AG04450 (cell line): ENCODE measurements at regions of chr22 and their contacts with region 1.

Region 1: GRCh38 chr22:38257181-38257580 is 15.6 kb downstream of the TMEM184B start:
- DNase-seq: peak; percentile 46
- H3K4me3 ChIP-seq: peak overlapping the region; percentile 37
- H3K27ac ChIP-seq: peak overlapping the region; percentile 76
- H3K27me3 ChIP-seq: no peaks in the 10 kb centered on the region
- CTCF ChIP-seq: no peak

Region 2: GRCh38 chr22:38088629-38089473 is 168.3 kb before region 1 on chr22:
- CTCF ChIA-PET with region 1: no interaction called
- POLR2A ChIA-PET with region 1: no interaction called
- DNase-seq: no peak
- H3K4me3 ChIP-seq: peak overlapping the region; percentile 13; the same call in 1 of the 2 replicates
- H3K27ac ChIP-seq: no peak overlapping the region
- H3K27me3 ChIP-seq: peaks cover 34% of the 10 kb centered on the region
- CTCF ChIP-seq: no peak

Region 3: DNA sequence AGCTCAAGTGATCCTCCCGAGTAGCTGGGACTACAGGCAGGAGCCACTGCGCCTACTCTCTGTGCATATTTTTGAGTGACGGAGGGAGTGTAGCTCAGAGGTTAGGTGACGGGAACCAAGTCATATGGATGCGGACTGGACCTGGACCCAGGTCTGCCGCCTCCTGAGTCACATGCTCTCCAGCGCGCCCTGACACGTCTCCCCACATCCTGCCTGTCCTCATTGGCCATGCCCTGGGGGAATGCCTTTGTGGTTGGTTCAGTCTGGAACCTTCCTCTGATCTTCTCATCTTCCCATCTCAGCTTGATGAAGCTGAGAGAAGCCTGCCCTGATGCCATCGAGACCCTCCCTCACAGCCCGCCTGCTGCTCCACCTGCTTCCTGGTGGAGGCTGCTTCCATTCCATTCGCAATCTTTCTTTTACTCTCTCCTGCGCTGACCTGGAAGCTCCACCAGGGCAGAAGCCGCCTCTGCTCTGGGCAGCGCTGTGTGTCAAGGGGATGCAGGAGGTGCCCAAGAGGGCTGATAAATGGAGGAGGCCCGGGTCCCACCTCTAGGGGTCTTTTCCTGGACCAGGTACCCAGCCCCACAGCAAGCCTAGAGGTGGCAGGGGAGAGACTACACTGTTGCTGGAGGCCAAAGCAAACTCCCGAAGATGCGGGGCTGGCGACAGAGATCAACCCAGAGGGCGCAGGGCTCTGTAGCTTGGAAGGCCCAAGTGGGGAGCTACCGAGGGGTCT is 132.8 kb before region 1 on chr22:
- CTCF ChIA-PET with region 1: no interaction called
- POLR2A ChIA-PET with region 1: no interaction called
- DNase-seq: no peak
- H3K4me3 ChIP-seq: no peak overlapping the region
- H3K27ac ChIP-seq: no peak overlapping the region
- H3K27me3 ChIP-seq: peaks cover 4% of the 10 kb centered on the region
- CTCF ChIP-seq: no peak

Region 4: DNA sequence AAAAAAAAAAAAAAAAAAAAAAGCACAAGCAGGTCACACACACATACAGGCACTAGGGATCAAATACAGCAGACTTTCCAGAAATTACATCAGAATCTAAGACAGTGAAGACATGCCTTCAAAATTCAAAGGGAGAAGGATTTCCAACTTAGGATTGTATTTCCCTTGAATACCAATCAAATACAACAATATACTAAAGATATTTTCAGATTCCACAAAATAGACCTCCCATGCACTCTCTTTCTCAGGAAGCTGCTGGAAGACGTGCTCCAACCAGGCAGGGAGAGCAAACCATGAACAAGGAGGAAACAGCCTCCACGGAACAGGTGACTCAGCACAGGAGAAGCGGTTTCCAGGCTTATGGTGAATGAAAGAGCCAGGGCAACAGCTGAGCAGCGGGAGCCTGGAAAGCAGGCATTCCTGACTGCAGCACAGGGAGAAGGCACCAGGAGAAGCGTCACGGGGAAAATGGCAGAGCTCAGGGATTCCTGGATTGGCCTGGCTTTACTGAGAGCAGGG is 16.4 kb before region 1 on chr22:
- CTCF ChIA-PET with region 1: no interaction called
- POLR2A ChIA-PET with region 1: interaction called, 29 read pairs
- DNase-seq: peak; percentile 56
- H3K4me3 ChIP-seq: no peak overlapping the region
- H3K27ac ChIP-seq: peak overlapping the region; percentile 87
- H3K27me3 ChIP-seq: no peaks in the 10 kb centered on the region
- CTCF ChIP-seq: no peak

Region 5: GRCh38 chr22:38305471-38306448 is 48.6 kb after region 1 on chr22:
- CTCF ChIA-PET with region 1: no interaction called
- POLR2A ChIA-PET with region 1: no interaction called
- DNase-seq: no peak
- H3K4me3 ChIP-seq: no peak overlapping the region
- H3K27ac ChIP-seq: no peak overlapping the region
- H3K27me3 ChIP-seq: no peaks in the 10 kb centered on the region
- CTCF ChIP-seq: no peak